ENCODE measurements at regions of chr11 and their contacts with region 1.

Region 1: DNA sequence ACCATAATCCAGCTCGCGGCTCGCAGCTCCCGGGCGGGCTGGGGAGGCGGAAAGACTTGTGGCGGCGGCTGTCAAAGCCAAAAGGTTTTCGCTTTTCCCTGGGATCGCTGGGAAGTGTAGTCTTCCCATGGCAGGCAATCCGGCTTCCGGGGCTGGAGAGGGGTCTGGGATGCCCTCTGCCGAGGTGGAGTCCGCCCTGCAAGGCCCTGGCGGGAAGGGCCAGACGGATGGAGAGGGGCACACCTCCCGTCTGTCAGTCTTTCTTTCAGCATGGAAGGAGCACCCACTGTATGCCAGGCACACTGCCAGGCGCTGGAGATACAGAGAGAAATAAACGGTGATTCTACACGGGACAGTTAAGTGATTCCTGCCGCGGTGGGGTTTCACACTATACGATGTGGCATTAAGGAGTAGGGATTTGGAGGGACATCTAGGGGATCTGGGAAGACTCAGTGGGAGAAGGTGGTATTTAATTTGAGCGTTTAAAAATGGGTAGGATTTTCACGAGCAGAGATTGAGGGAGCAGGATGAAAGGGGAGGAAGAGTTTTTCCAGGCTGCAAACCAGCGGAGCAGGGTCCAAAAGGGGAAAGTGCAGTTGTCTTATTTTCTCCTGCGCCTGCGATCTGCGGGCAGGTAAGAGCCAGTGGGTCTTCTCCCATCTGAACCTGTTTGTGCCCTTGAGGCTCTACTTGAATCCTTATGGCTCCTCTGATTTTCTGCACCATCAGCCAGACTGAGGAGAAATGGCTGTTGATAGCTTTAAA is at the start of gene BACE1:
- DNase-seq: peak; percentile 52
- H3K4me3 ChIP-seq: peak within 1 kb of the TSS; percentile 86
- H3K27me3 ChIP-seq: no peaks in the 10 kb centered on the region
- CTCF ChIP-seq: peak; percentile 75
- polyA plus RNA-seq, gene BACE1: 47.8 and 99.6 TPM in 2 replicates

Region 2: DNA sequence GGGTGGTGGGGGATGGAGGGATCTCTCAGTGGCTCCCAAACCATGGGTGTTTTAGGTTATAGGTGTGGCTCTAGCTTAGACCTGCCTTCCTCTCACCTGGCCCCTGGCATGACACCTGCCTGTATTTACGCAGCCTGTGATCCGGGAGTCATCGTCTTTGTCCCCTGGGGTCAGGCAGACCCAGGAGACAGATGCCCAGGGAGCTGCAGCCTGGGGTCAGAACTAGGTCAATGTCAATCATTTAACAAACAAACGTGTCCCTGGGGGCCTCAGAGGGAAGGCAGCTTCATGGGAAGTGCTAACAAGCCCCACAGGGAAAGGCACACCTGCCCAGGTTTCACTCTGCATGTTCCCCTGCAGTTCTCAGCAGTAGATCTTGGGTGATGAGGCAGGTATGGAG is 13.3 kb before region 1 on chr11:
- CTCF ChIA-PET with region 1: interaction called, 10 read pairs
- POLR2A ChIA-PET with region 1: no interaction called
- DNase-seq: no peak
- H3K4me3 ChIP-seq: no peak overlapping the region
- H3K27me3 ChIP-seq: no peaks in the 10 kb centered on the region
- CTCF ChIP-seq: no peak